ENCODE measurements at regions of chr7 and their contacts with region 1.

Region 1: DNA sequence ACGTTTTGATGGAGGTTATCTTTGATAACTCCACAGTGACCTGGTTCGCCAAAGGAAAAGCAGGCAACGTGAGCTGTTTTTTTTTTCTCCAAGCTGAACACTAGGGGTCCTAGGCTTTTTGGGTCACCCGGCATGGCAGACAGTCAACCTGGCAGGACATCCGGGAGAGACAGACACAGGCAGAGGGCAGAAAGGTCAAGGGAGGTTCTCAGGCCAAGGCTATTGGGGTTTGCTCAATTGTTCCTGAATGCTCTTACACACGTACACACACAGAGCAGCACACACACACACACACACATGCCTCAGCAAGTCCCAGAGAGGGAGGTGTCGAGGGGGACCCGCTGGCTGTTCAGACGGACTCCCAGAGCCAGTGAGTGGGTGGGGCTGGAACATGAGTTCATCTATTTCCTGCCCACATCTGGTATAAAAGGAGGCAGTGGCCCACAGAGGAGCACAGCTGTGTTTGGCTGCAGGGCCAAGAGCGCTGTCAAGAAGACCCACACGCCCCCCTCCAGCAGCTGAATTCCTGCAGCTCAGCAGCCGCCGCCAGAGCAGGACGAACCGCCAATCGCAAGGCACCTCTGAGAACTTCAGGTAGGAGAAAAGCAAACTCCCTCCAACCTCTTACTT is at the start of gene SERPINE1:
- DNase-seq: peak; percentile 98
- H3K4me3 ChIP-seq: peak within 1 kb of the TSS; percentile 87 to 98 (median 88)
- H3K27ac ChIP-seq: peak within 1 kb of the TSS; percentile 83
- H3K4me1 ChIP-seq: peaks cover 57% of the 10 kb centered on the region
- H3K27me3 ChIP-seq: no peaks in the 10 kb centered on the region
- CTCF ChIP-seq: peak; percentile 24 to 26
- POLR2A ChIP-seq: peak; percentile 100
- total RNA-seq, gene SERPINE1: 2,296 and 2,645 TPM in 2 replicates

Region 2: DNA sequence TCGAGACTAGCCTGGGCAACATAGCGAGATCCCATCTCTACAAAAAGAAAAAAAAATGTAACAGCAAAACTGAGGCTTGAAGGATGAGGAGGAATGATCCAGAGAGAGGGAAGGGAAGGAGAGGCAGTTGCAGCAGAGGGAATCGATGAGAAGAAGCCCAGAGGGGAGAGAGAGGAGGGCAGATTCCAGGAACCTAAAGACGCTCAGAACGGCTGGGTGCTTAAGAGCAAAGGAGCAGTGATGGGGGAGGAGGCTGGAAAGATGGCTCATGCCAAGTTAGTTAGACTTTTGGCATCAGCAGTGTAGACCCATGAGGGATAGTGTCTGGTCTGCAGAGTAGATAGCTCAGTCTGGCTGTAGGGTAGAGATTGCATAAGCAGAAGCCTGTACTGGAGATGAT is 117.1 kb before region 1 on chr7:
- CTCF ChIA-PET with region 1: no interaction called
- POLR2A ChIA-PET with region 1: no interaction called
- dilution Hi-C with region 1: no loop called
- intact Hi-C with region 1: no loop called
- DNase-seq: no peak
- H3K4me3 ChIP-seq: no peak overlapping the region
- H3K27ac ChIP-seq: no peak overlapping the region
- H3K4me1 ChIP-seq: no peaks in the 10 kb centered on the region
- H3K27me3 ChIP-seq: no peaks in the 10 kb centered on the region
- CTCF ChIP-seq: no peak
- POLR2A ChIP-seq: no peak

Region 3: GRCh38 chr7:101077303-101078089 is 49.3 kb before region 1 on chr7:
- CTCF ChIA-PET with region 1: interaction called, 16 read pairs
- POLR2A ChIA-PET with region 1: no interaction called
- dilution Hi-C with region 1: no loop called
- intact Hi-C with region 1: no loop called
- DNase-seq: peak; percentile 70
- H3K4me3 ChIP-seq: no peak overlapping the region
- H3K27ac ChIP-seq: no peak overlapping the region
- H3K4me1 ChIP-seq: no peaks in the 10 kb centered on the region
- H3K27me3 ChIP-seq: peaks cover under 1 to 4% of the 10 kb centered on the region in 2 experiments
- CTCF ChIP-seq: peak; percentile 88 to 94
- POLR2A ChIP-seq: no peak

Region 4: DNA sequence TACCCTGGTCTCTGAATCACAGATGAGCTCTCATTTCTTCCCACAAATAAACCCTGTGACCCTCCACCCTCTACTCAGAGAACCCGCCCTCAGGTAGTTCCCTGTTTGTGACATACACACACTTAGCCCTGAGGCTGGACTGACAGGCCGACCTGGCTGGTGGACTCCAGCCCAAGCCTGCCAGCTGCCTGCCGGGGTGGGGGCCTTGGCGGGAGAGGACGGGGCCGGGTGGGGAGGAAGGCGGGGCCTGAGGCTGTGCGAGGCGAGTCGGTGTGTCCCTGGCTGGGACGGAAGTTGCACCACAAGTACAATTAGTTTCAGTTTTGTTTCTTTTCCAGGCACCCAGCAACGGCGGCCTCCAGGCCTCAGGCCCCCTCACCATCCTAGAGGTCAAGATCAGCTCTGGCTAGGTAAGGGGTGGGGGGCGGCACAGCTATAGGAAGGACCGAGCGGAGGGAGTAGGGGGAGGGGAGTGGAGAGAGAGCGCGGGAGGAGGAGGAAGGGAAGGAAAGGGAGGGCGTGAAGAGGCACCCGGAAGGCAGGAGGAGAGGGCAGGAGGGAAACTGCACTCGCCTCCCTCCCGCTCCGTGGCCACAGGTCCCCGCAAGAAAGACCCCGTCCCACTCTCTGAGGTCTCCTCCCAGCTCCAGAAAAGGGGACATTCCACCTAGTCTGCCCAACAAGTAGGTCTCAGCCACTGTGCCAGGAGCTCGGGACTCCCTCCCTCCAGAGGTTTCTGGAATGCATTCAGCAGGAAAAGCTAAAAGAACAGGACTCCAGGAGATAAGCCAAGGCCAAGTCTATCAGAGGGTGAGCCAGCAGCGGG is 41.4 kb before region 1 on chr7 and contains the start of gene TRIM56:
- CTCF ChIA-PET with region 1: interaction called, 5 read pairs
- POLR2A ChIA-PET with region 1: interaction called, 18 read pairs
- dilution Hi-C with region 1: no loop called
- intact Hi-C with region 1: no loop called
- DNase-seq: peak; percentile 86
- H3K4me3 ChIP-seq: peak within 1 kb of the TSS; percentile 63 to 71 (median 66)
- H3K27ac ChIP-seq: peak within 1 kb of the TSS; percentile 77
- H3K4me1 ChIP-seq: peaks cover 12% of the 10 kb centered on the region
- H3K27me3 ChIP-seq: no peaks in the 10 kb centered on the region
- CTCF ChIP-seq: no peak
- POLR2A ChIP-seq: no peak
- total RNA-seq, gene TRIM56: 21.8 and 25.1 TPM in 2 replicates

Region 5: GRCh38 chr7:101094416-101095375 is 32.1 kb before region 1 on chr7:
- CTCF ChIA-PET with region 1: interaction called, 41 read pairs
- POLR2A ChIA-PET with region 1: interaction called, 38 read pairs
- dilution Hi-C with region 1: no loop called
- intact Hi-C with region 1: loop called (anchors 1 kb)
- DNase-seq: peak; percentile 63
- H3K4me3 ChIP-seq: no peak overlapping the region
- H3K27ac ChIP-seq: peak overlapping the region; percentile 41
- H3K4me1 ChIP-seq: peaks cover 22% of the 10 kb centered on the region
- H3K27me3 ChIP-seq: no peaks in the 10 kb centered on the region
- CTCF ChIP-seq: peak; percentile 80 to 81
- POLR2A ChIP-seq: no peak

Region 6: GRCh38 chr7:101099969-101100781 is 26.6 kb before region 1 on chr7:
- CTCF ChIA-PET with region 1: interaction called, 41 read pairs
- POLR2A ChIA-PET with region 1: interaction called, 38 read pairs
- dilution Hi-C with region 1: no loop called
- intact Hi-C with region 1: loop called (anchors 1 kb)
- DNase-seq: peak; percentile 97
- H3K4me3 ChIP-seq: no peak overlapping the region
- H3K27ac ChIP-seq: peak overlapping the region; percentile 89
- H3K4me1 ChIP-seq: peaks cover 43% of the 10 kb centered on the region
- H3K27me3 ChIP-seq: no peaks in the 10 kb centered on the region
- CTCF ChIP-seq: no peak
- POLR2A ChIP-seq: peak; percentile 89

Region 7: DNA sequence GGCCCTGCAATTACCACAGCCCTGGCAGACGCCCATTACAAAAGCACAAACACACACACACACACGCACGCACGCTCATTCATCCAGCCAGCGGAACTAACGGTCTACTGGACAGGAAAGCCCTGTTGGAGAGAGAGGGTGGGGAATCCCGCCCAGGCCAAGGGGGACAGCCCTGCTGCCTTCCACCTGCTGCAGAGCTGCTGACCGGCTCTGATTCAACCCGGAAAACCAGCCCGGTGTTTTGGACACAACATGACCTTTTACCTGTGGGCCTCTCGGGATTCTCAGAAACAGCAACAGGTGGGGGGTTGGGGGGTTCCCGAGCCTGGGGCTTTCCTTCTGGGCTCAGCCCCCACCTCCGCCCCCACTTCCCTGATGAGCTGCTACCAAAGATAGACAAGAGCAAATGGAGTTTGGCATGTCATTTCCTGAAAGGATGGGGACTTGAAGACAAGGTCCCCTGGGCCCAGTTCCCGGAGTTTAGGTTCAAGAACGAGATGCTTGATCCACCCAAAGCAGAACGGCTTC is 18.4 kb before region 1 on chr7:
- CTCF ChIA-PET with region 1: interaction called, 25 read pairs
- POLR2A ChIA-PET with region 1: interaction called, 132 read pairs
- dilution Hi-C with region 1: no loop called
- intact Hi-C with region 1: loop called (anchors 1 kb)
- DNase-seq: peak; percentile 95
- H3K4me3 ChIP-seq: no peak overlapping the region
- H3K27ac ChIP-seq: peak overlapping the region; percentile 94
- H3K4me1 ChIP-seq: peaks cover 57% of the 10 kb centered on the region
- H3K27me3 ChIP-seq: no peaks in the 10 kb centered on the region
- CTCF ChIP-seq: no peak
- POLR2A ChIP-seq: peak; percentile 60

Measured in endothelial cell of umbilical vein (primary cell).